ENCODE measurements at regions of chr10 and their contacts with region 1.

Region 1: DNA sequence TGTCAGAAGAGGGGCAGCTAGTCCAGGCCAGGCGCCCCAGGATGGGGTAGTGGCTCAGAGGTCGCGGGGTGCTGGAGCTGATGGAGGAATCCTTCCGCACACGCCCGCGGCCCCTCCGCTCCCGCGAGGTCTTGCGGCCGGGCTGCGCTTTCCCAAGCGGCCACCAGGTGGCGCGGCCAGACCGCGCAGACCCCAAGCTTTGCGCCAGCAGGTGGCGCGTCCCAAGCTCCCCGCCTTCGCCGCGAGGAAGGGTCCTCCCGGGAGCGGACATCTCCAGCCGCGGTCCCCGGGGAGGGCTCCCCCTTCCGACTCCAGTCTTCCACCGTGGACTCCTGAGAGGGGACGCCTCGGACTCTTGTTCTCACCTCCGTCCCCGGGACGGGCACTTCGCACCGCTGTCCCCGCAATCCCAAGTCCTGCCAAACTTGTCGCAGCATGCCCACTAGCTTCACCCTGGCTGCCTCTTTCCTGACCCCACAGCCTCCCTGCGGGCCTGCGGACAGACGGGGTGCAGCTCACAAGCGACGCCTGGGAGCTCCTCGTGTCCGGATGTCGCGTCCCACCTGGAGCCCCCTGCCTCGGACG is 19.4 kb downstream of the KCNK18 start:
- DNase-seq: peak; percentile 72
- H3K4me3 Mint-ChIP-seq: peak overlapping the region; percentile 65
- H3K27ac Mint-ChIP-seq: no peak overlapping the region
- H3K4me1 Mint-ChIP-seq: peaks cover 8% of the 10 kb centered on the region
- H3K27me3 Mint-ChIP-seq: peaks cover 56% of the 10 kb centered on the region

Region 2: DNA sequence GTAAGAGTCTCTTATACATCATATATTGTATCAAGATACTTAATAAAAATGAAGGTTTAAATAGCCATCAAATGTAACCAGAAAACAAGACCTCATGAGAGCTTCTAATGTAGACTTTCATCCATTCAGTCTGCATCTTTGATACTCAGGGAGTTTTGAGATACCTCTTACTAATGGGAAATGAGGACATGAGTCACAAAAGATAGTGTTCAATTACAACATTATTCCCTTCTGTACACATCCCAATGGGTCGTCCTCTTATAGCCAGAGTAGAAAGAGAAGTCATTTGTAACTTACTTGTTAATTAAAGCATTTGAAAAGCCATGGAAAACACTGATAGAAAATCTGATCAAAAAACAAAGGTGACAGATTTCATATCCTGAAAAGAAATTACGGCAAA is 231.1 kb before region 1 on chr10:
- CTCF ChIA-PET with region 1: no interaction called
- DNase-seq: no peak
- H3K4me3 Mint-ChIP-seq: no peak overlapping the region
- H3K27ac Mint-ChIP-seq: no peak overlapping the region
- H3K4me1 Mint-ChIP-seq: no peaks in the 10 kb centered on the region
- H3K27me3 Mint-ChIP-seq: peaks cover under 1% of the 10 kb centered on the region

Region 3: DNA sequence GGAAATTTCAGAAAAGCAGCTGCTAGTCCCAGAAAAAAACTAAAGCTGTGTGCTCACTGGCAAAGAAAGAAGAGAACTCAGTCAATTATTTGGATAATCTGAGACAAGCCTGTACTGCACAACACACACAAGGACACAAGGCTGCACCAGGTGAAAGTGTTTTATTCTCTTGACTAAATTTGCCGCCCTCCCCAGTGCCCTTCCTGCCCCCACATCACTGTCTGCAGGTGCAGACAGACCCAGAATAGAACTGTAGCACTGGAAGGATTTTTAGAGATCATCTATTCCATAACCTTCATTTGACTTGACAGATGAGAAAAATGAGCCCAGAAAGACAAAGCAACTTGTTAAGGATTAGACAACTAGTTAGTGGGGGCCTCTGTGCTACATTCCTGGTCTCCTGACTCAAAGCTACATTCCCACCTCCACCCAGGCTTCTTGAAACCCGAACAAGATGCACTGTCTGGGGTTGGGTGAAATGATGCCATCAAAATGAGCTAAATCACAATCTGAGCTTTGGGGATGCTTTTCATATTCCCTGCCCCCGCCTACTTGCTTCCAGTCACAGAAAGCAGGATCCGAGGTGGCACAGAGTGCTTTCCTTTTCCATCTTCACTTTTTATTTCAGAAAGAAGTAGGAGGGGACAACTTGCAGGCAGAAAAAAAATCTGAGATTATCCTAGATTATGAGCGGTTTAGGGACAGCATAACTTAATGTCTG is 73.4 kb before region 1 on chr10:
- CTCF ChIA-PET with region 1: no interaction called
- DNase-seq: no peak
- H3K4me3 Mint-ChIP-seq: no peak overlapping the region
- H3K27ac Mint-ChIP-seq: no peak overlapping the region
- H3K4me1 Mint-ChIP-seq: no peaks in the 10 kb centered on the region
- H3K27me3 Mint-ChIP-seq: peaks cover 66% of the 10 kb centered on the region

Region 4: GRCh38 chr10:117204316-117204715 is 12.4 kb before region 1 on chr10:
- CTCF ChIA-PET with region 1: interaction called, 11 read pairs
- DNase-seq: peak; percentile 5
- H3K4me3 Mint-ChIP-seq: no peak overlapping the region
- H3K27ac Mint-ChIP-seq: no peak overlapping the region
- H3K4me1 Mint-ChIP-seq: no peaks in the 10 kb centered on the region
- H3K27me3 Mint-ChIP-seq: peaks cover 4% of the 10 kb centered on the region

Region 5: DNA sequence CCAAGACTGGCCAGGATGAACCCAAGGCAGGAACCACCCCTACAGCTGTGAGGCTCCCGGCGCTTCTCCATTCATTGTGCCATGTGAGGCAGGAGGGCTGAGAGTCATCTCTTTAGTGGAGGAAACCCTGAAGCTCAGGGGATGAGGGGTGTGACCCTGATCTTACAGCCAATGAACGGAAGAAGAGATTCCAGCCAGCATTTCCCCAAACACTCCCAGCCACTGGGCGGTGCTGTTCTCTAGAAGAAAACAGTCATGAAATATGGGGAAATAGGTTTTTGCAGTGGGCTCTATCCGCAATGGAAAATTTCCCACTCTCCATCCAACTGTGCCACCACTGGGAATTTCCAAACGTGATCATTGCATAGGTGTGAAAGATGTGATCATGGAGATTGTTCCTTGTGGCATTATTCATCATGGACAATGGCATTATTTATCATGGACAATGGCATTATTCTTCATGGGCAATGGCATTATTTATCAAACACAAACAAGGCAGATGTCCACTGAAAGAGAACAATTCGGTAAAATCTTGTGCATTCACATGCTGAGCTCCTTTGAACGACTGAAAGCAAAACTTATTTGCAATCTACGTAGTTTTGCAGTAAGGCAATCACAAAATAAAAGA is 10.2 kb after region 1 on chr10:
- CTCF ChIA-PET with region 1: interaction called, 17 read pairs
- DNase-seq: no peak
- H3K4me3 Mint-ChIP-seq: no peak overlapping the region
- H3K27ac Mint-ChIP-seq: no peak overlapping the region
- H3K4me1 Mint-ChIP-seq: no peaks in the 10 kb centered on the region
- H3K27me3 Mint-ChIP-seq: peaks cover 28% of the 10 kb centered on the region

Region 6: GRCh38 chr10:117284716-117285494 is 68.2 kb after region 1 on chr10:
- CTCF ChIA-PET with region 1: interaction called, 11 read pairs
- DNase-seq: no peak
- H3K4me3 Mint-ChIP-seq: no peak overlapping the region
- H3K27ac Mint-ChIP-seq: no peak overlapping the region
- H3K4me1 Mint-ChIP-seq: peaks cover 6% of the 10 kb centered on the region
- H3K27me3 Mint-ChIP-seq: no peaks in the 10 kb centered on the region

Region 7: DNA sequence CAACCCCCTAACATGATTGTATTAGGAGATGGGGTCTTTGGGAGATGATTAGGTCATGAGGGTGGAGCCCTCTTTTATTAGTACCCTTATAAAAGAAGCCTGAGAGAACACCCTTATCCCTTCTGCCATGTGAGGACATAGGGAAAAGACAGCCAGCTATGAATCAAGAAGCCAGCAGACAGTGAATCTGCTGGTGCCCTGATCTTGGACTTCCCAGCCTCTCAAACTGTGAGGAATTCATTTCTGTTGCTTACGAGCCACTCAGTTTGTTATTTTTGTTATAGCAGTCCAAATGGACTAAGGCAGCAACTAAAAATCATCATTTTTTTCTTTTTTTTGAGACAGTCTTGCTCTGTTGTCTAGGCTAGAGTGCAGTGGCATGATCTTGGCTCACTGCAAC is 84.0 kb after region 1 on chr10:
- CTCF ChIA-PET with region 1: no interaction called
- DNase-seq: no peak
- H3K4me3 Mint-ChIP-seq: no peak overlapping the region
- H3K27ac Mint-ChIP-seq: no peak overlapping the region
- H3K4me1 Mint-ChIP-seq: no peaks in the 10 kb centered on the region
- H3K27me3 Mint-ChIP-seq: no peaks in the 10 kb centered on the region

Region 8: DNA sequence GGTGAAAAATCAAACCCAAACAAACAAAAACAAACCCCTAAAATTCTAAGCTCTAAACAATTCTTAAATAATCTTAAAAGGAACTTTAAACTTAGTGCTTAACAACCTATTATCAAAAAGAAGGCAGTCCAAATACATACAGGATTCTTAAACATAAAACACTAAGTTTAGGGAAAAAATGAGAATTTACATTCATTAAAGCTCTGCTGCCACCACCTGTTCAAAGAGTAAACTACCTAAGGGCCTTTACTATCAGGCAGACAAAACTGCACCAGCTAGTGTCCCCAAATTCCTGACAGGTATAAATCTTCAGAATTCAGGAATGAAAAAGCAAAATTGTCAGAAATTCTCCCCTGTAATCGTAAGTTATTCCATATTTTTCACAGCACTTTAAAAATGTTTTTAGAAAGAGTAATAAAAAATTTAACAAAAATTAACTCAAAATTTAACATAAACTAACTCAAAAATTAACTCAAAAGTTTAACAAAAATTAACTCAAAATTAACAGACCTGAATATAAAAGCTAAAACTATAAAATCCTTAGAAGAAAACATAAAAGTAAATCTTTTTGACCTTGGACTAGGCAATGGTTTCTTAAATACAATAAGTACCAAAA is 103.5 kb after region 1 on chr10:
- CTCF ChIA-PET with region 1: interaction called, 102 read pairs
- DNase-seq: no peak
- H3K4me3 Mint-ChIP-seq: no peak overlapping the region
- H3K27ac Mint-ChIP-seq: no peak overlapping the region
- H3K4me1 Mint-ChIP-seq: no peaks in the 10 kb centered on the region
- H3K27me3 Mint-ChIP-seq: no peaks in the 10 kb centered on the region